Activated CD4-positive, alpha-beta memory T cell treated with anti-CD3 and anti-CD28 coated beads for 36 hours (primary cell): ENCODE measurements at regions of chr19 and their contacts with region 1.

Region 1: GRCh38 chr19:6125571-6125989 is 9.9 kb upstream of the ACSBG2 start:
- DNase-seq: peak; percentile 72
- H3K4me3 Mint-ChIP-seq: no peak overlapping the region
- H3K27ac Mint-ChIP-seq: no peak overlapping the region
- H3K4me1 Mint-ChIP-seq: no peaks in the 10 kb centered on the region
- H3K27me3 Mint-ChIP-seq: no peaks in the 10 kb centered on the region

Region 2: DNA sequence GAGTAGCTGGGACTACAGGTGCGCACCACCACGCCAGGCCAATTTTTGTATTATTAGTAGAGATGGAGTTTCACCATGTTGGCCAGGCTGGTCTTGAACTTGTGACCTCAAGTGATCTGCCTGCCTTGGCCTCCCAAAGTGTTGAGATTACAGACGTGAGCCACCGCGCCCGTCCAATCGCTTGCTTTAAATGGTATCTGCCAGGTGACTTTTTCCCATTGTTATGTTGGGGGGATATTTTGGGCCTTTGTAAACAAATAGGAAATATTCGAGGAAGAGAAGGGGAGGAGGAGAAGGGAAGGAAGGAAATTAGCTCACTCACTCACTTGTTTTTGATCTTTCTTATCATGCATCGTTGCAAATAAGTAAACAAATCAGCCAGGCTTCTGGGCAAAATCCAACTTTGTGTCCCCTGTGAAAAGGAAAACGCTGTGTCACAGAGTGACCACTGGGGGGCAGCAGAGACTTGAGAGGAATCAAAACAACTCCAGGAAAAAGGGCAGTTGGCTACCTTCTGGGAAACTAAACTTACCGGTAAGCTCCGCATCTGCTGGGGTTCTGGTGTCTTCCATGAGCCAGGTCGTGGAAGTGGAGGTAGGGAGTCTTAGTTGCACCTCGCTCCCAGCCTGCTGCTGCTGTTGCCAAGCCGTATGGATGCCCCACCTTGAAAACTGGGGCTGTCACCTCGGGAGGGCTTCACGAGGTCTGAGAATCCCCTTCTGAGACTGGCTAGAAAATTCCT is 138.3 kb before region 1 on chr19:
- CTCF ChIA-PET with region 1: interaction called, 14 read pairs
- POLR2A ChIA-PET with region 1: no interaction called
- intact Hi-C with region 1: loop called (anchors 1 kb)
- DNase-seq: peak; percentile 82
- H3K4me3 Mint-ChIP-seq: peak overlapping the region; percentile 67
- H3K27ac Mint-ChIP-seq: no peak overlapping the region
- H3K4me1 Mint-ChIP-seq: peaks cover 30% of the 10 kb centered on the region
- H3K27me3 Mint-ChIP-seq: no peaks in the 10 kb centered on the region

Region 3: DNA sequence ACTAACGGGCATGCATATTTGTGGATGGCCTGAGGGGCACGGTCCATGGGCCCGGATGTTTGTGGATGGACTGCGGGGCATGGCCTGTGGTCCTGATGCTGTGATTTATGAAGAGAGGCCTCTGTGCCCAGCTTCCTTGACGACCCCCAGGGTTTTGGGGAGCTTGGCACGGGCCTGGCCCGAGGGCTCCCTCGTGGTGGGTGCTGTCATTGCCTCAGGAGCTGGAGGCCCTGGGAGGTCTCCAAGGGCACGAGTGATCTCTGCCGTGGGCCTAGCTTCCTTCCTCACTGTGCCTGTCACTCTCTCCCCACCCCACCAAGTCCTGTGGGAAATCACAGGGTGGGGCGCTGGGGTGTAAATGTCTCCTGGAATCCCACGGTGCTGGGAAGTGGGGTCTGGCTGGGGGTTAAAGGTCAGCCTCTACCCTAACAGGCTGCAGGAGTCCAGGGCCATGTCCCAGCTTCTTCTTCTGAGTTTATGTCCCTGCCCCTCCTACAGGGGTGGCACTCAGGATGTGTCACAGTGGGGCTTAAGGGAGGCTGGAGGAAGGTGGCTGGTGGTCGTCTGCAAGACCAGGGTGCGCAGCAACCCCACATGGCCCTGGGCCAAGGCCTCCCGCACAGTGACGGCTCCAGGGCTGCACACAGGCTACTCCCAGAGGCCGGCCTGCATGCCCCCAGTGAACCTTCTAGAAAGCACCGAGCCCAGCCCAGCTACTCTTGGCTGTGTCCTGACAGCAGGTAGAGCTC is 120.1 kb before region 1 on chr19:
- CTCF ChIA-PET with region 1: no interaction called
- POLR2A ChIA-PET with region 1: no interaction called
- intact Hi-C with region 1: no loop called
- DNase-seq: no peak
- H3K4me3 Mint-ChIP-seq: no peak overlapping the region
- H3K27ac Mint-ChIP-seq: no peak overlapping the region
- H3K4me1 Mint-ChIP-seq: no peaks in the 10 kb centered on the region
- H3K27me3 Mint-ChIP-seq: no peaks in the 10 kb centered on the region

Region 4: DNA sequence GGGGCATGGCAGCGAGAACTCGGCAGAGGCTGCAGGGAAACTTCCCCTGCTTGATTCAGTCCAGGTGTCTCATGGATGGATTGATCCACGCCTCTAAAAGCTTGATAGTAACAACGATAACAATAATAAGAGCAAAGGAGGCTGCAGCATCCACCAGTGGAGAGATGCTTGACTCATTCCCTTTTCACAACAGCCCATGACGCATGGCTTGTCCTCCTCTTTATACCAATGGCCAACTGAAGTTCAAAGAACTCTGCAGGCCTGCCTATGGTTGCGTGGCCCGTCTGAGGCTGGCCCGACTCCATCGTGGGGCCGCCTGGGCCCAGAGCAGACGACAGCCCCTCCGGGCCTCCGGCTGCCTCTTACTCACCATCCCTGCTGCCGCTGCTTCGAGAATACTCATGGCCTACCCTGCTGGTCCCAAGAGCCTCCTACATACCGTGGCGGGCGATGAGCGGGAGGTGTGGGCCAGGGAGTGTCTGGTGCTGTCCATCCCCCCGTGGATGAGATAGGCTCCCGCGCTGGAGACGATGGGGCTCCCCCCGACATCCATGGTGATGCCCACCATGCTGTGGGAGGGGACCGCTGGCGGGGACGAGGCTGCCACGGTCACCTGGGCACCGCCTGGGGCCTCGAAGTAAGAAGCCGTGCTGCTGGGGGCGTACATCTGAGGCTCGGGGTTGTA is 85.9 kb before region 1 on chr19:
- CTCF ChIA-PET with region 1: interaction called, 19 read pairs
- POLR2A ChIA-PET with region 1: no interaction called
- intact Hi-C with region 1: no loop called
- DNase-seq: no peak
- H3K4me3 Mint-ChIP-seq: no peak overlapping the region
- H3K27ac Mint-ChIP-seq: peak overlapping the region; percentile 77
- H3K4me1 Mint-ChIP-seq: peaks cover 18% of the 10 kb centered on the region
- H3K27me3 Mint-ChIP-seq: no peaks in the 10 kb centered on the region

Region 5: DNA sequence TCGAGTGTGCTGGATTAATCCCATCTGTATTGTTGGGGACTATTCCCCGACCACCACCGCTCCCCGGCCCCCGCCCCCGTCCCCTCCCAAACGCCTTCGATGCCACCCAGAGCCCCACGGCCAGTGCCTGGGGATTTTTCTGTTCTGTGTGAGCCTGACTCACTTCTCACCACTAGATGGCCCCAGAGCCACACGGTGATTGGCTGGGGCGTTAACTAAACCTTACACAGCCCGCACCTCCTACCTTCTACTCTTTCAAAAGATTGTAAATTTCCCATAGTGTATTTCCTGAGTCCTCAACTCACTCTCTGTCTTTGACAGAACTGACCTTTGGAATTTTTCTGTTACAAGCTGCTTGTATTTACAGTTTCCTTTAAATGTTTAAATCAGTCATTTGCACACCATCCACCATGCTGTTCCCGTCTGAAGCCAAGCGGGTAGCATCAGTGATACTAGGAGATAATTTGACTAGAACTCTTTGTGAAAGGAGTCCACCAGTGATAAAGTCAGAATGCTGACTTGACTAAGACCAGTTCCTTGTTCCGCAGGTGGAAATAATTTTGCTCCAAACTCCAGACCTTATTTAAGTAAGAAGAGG is 76.7 kb before region 1 on chr19:
- CTCF ChIA-PET with region 1: interaction called, 146 read pairs
- POLR2A ChIA-PET with region 1: interaction called, 4 read pairs
- intact Hi-C with region 1: loop called (anchors 1 kb)
- DNase-seq: peak; percentile 85
- H3K4me3 Mint-ChIP-seq: no peak overlapping the region
- H3K27ac Mint-ChIP-seq: no peak overlapping the region
- H3K4me1 Mint-ChIP-seq: peaks cover 5% of the 10 kb centered on the region
- H3K27me3 Mint-ChIP-seq: no peaks in the 10 kb centered on the region

Region 6: DNA sequence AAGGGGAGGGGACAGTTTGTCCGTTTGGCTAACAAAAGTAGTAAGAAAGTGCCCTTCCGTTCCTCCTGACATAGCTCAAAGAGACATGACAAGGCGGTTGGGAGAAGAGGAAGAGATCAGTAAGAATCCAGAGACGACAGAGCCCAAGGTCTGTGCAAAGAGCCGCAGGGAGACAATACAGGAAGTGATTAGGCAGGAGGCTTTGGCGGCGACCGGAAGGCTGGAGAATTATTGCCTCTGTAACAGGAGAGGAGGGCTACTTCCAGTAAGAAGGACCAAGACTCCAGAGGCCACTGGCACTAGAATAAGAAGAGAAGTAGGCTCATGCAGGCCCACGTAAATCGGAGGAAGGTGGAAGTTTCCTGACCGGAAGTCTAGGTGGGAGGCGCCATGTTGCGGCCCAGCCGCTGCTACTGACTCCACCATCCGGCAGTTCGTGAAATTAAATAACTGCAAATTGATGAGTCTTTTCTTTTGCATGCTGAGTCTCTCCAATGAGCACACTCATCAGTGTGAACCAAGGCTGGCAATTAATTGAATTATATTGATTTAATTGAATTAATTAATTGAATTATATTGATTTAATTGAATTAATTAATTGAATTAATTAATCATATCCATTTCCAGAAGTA is 25.2 kb before region 1 on chr19:
- CTCF ChIA-PET with region 1: interaction called, 17 read pairs
- POLR2A ChIA-PET with region 1: no interaction called
- intact Hi-C with region 1: no loop called
- DNase-seq: peak; percentile 52
- H3K4me3 Mint-ChIP-seq: peak overlapping the region; percentile 60
- H3K27ac Mint-ChIP-seq: peak overlapping the region; percentile 19
- H3K4me1 Mint-ChIP-seq: peaks cover 9% of the 10 kb centered on the region
- H3K27me3 Mint-ChIP-seq: no peaks in the 10 kb centered on the region

Region 7: GRCh38 chr19:6110360-6110977 is 15.1 kb before region 1 on chr19 and contains the start of gene RFX2:
- CTCF ChIA-PET with region 1: interaction called, 27 read pairs
- POLR2A ChIA-PET with region 1: interaction called, 5 read pairs
- intact Hi-C with region 1: no loop called
- DNase-seq: peak; percentile 99
- H3K4me3 Mint-ChIP-seq: peak within 1 kb of the TSS; percentile 80
- H3K27ac Mint-ChIP-seq: peak within 1 kb of the TSS; percentile 74
- H3K4me1 Mint-ChIP-seq: peaks cover 19% of the 10 kb centered on the region
- H3K27me3 Mint-ChIP-seq: peaks cover 12% of the 10 kb centered on the region
- total RNA-seq, gene RFX2: 6.5 to 7.9 TPM

Region 8: DNA sequence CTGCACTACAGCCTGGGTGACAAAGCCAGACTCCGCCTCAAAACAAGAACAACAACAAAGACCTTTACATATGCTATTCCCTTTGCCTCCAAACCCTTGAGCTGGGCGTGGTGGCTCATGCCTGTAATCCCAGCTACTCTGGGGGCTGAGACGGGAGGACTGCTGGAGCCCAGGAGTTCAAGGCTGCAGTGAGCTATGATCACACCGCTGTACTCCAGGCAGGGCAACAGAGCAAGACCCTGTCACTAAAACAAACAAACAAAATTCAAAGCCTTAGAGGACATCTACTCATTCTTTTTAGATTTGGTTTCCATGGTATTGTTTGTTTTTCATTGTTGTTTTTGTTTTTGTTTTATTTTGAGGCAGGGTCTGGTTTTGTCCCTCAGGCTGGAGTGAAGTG is 200.0 kb after region 1 on chr19:
- CTCF ChIA-PET with region 1: no interaction called
- POLR2A ChIA-PET with region 1: no interaction called
- intact Hi-C with region 1: no loop called
- DNase-seq: no peak
- H3K4me3 Mint-ChIP-seq: no peak overlapping the region
- H3K27ac Mint-ChIP-seq: no peak overlapping the region
- H3K4me1 Mint-ChIP-seq: no peaks in the 10 kb centered on the region
- H3K27me3 Mint-ChIP-seq: no peaks in the 10 kb centered on the region